ENCODE measurements at regions of chr12 and their contacts with region 1.

Region 1: GRCh38 chr12:48618541-48618940 is 48.7 kb upstream of the LALBA start:
- DNase-seq: peak; percentile 62 to 75 (median 72)
- H3K4me3 ChIP-seq: no peak overlapping the region
- H3K4me3 Mint-ChIP-seq: no peak overlapping the region
- H3K27ac ChIP-seq: no peak overlapping the region
- H3K27ac Mint-ChIP-seq: no peak overlapping the region
- H3K4me1 ChIP-seq: no peaks in the 10 kb centered on the region
- H3K4me1 Mint-ChIP-seq: peaks cover 0 to 6% (median 2%) of the 10 kb centered on the region in 4 donors
- H3K27me3 ChIP-seq: no peaks in the 10 kb centered on the region
- H3K27me3 Mint-ChIP-seq: peaks cover 24 to 39% of the 10 kb centered on the region in 2 donors

Region 2: DNA sequence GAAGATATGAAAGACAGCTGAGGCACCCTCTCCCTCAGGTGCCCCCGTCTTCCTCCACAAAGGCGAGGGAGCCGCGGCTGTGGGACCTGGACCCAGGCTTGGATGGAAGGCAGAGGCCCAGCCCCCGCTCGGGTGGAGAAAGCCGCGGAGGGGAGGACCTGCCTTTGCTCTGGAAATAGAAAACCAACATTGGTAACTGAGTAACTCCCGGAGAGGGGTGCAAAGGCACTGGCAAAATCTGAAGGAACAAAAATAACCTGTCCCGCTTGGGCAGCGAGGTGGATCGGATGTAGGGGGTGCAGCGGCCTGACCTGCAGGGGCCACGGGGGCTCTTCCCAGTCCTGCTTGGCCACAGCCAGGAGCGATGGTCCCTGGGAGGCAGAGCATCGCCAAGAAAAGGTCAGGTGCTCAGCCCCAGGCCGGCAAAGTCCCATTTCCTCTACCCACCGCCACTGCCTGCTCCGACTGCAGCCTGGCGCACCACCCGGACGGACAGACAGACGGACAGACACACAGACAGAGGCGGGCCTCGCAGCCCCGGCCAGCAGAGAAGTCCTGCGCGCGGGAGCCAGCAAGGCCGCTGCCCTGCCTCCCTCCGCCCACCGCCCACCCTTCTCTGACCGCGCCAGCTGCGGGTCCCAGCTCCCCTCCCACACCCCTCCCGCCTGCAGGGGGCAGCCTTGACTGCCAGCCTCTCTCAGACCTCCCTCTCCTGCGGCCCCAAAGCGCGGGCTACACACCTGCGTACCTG is 676.5 kb before region 1 on chr12:
- CTCF ChIA-PET with region 1: interaction called, 5 read pairs
- POLR2A ChIA-PET with region 1: no interaction called
- intact Hi-C with region 1: loop called (anchors 5 kb)
- DNase-seq: peak; percentile 37 to 50 (median 40)
- H3K4me3 ChIP-seq: no peak overlapping the region
- H3K4me3 Mint-ChIP-seq: no peak overlapping the region
- H3K27ac ChIP-seq: no peak overlapping the region
- H3K27ac Mint-ChIP-seq: no peak overlapping the region
- H3K4me1 ChIP-seq: no peaks in the 10 kb centered on the region
- H3K4me1 Mint-ChIP-seq: peaks cover 0 to 9% (median under 1%) of the 10 kb centered on the region in 4 donors
- H3K27me3 ChIP-seq: no peaks in the 10 kb centered on the region
- H3K27me3 Mint-ChIP-seq: peaks cover 13 to 15% of the 10 kb centered on the region in 2 donors

Region 3: GRCh38 chr12:48542300-48542928 is 76.1 kb before region 1 on chr12:
- CTCF ChIA-PET with region 1: interaction called, 75 read pairs
- POLR2A ChIA-PET with region 1: no interaction called
- intact Hi-C with region 1: no loop called
- DNase-seq: peak in 4 of 5 donors; percentile 14 to 40 (median 25)
- H3K4me3 ChIP-seq: no peak overlapping the region
- H3K4me3 Mint-ChIP-seq: no peak overlapping the region
- H3K27ac ChIP-seq: no peak overlapping the region
- H3K27ac Mint-ChIP-seq: no peak overlapping the region
- H3K4me1 ChIP-seq: no peaks in the 10 kb centered on the region
- H3K4me1 Mint-ChIP-seq: peaks cover 0 to 3% (median 0%) of the 10 kb centered on the region in 4 donors
- H3K27me3 ChIP-seq: no peaks in the 10 kb centered on the region
- H3K27me3 Mint-ChIP-seq: peaks cover 0 to 10% of the 10 kb centered on the region in 2 donors

Region 4: DNA sequence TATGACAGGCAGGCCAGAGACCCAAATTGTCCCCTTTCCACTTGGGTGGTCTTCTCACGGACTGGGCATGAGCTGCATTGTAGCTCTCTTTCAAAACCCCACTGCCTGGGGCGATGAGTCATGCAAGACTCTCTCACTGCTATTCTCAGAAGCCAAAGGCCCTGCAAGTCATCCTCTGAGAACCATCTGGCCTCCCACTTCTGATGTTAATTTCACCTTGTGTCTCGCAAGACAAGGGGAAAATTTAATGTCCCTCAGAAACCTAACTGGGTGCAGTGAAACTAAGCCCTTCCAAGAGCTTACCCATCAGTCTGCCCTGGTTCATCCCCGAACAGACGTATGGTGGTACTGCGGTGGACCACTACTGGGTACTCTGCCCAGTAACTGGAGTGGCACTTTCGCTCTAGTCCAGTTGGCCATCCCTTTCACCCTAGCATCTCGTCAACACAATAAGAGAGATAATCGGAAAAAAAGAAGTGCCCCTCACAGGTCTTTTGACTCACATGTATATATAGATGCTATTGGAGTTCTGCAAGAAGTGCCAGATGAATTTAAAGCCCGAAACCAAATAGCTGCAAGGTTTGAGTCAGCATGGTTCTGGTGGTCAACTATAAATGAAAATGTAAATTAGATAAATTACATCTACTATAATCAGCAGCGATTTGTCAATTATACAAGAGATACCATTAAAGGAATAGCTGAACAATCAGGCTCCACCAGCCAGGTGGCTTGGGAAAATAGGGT is 17.4 kb before region 1 on chr12:
- CTCF ChIA-PET with region 1: interaction called, 10 read pairs
- POLR2A ChIA-PET with region 1: no interaction called
- intact Hi-C with region 1: no loop called
- DNase-seq: no peak
- H3K4me3 ChIP-seq: no peak overlapping the region
- H3K4me3 Mint-ChIP-seq: no peak overlapping the region
- H3K27ac ChIP-seq: no peak overlapping the region
- H3K27ac Mint-ChIP-seq: no peak overlapping the region
- H3K4me1 ChIP-seq: no peaks in the 10 kb centered on the region
- H3K4me1 Mint-ChIP-seq: no peaks in the 10 kb centered on the region
- H3K27me3 ChIP-seq: no peaks in the 10 kb centered on the region
- H3K27me3 Mint-ChIP-seq: peaks cover 4 to 21% of the 10 kb centered on the region in 2 donors

Region 5: GRCh38 chr12:48631057-48631456 is 12.5 kb after region 1 on chr12:
- CTCF ChIA-PET with region 1: interaction called, 11 read pairs
- POLR2A ChIA-PET with region 1: no interaction called
- intact Hi-C with region 1: no loop called
- DNase-seq: no peak
- H3K4me3 ChIP-seq: no peak overlapping the region
- H3K4me3 Mint-ChIP-seq: no peak overlapping the region
- H3K27ac ChIP-seq: no peak overlapping the region
- H3K27ac Mint-ChIP-seq: no peak overlapping the region
- H3K4me1 ChIP-seq: no peaks in the 10 kb centered on the region
- H3K4me1 Mint-ChIP-seq: no peaks in the 10 kb centered on the region
- H3K27me3 ChIP-seq: no peaks in the 10 kb centered on the region
- H3K27me3 Mint-ChIP-seq: peaks cover 13 to 26% of the 10 kb centered on the region in 2 donors

Measured in CD4-positive, alpha-beta memory T cell (primary cell).